ENCODE measurements at regions of chr1 and their contacts with region 1.

Region 1: DNA sequence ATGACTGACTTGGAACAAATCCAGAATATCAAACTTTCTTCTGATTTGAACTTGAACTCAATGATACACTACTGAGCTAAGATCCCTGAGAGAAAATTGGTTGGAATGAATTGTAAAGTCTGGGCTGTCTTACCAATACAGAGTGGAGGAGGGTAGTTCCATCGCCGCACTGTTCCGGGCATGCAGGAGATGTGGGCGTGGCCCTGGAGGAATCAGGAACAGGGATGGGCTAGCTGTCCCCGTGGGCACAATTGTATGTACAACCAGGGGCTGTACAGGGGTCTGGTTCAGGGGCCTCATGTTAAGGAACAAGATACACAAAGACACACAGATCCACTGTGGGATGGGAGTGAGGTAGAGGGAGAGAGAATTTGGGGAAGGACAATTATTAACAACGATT is 144.3 kb downstream of the ZSCAN20 start:
- DNase-seq: no peak
- H3K4me3 ChIP-seq: no peak overlapping the region
- H3K27ac ChIP-seq: no peak overlapping the region
- H3K27me3 ChIP-seq: no peaks in the 10 kb centered on the region
- CTCF ChIP-seq: no peak

Region 2: DNA sequence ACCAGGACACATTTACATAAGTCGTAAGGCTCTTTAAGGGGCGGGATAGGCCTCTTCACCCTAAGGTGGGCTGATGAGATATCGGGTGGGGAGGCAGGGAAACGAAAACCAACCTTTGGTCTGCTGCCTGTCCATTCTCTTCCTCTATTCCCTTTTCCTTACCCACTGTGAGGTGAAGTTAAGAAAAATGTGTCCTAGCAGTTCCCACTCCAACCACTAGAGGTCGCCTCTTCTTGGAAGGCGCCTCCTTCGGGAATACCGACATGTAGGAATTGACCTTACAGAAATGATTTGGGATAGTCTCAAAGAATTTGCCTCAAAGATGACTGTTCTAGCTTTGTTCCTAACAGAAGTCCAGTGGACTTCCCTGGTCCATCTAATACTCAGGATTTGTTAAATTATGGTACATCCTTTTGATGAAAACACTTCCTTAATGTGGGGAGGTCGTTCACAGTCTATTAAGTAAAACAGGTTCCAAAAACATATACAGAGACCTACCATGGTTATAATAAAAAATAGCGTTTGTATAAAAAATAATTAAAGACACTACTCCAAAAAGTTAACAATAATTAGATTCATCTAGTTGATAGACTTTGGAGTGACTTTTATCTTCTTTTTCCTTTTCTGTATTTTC is 521.7 kb before region 1 on chr1:
- CTCF ChIA-PET with region 1: interaction called, 11 read pairs
- POLR2A ChIA-PET with region 1: no interaction called
- DNase-seq: peak; percentile 29
- H3K4me3 ChIP-seq: no peak overlapping the region
- H3K27ac ChIP-seq: no peak overlapping the region
- H3K27me3 ChIP-seq: no peaks in the 10 kb centered on the region
- CTCF ChIP-seq: peak; percentile 99

Region 3: DNA sequence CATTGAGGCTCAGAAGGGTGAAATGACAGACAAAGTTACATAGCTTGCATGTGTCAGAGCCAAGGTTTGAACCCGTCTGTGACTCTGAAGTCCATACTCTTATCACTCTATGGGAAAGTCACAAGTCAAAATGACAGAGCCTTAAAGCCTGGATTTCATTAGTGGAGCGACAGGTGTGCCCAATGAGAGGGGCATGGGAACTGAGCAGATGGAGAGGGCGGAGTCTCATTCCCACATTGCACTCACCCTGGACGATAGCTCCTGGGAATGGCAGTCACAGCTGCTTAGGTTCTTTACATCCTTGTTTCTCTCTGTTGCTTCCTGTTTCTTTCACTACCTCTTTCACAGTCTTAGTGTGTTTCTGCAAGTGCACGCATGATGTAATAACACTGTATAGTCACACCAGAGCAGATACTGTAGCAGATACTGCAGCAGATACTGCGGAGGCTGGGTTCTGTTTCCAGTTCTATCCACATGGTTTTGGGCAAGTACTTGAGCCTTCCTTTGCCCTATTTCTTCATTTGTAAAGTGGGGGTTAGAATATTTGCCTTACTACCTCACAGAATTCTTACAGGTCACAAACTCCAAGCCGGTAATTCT is 17.2 kb before region 1 on chr1:
- CTCF ChIA-PET with region 1: interaction called, 19 read pairs
- POLR2A ChIA-PET with region 1: no interaction called
- DNase-seq: no peak
- H3K4me3 ChIP-seq: no peak overlapping the region
- H3K27ac ChIP-seq: no peak overlapping the region
- H3K27me3 ChIP-seq: no peaks in the 10 kb centered on the region
- CTCF ChIP-seq: no peak

Region 4: GRCh38 chr1:33653226-33653625 is 36.5 kb after region 1 on chr1:
- CTCF ChIA-PET with region 1: no interaction called
- POLR2A ChIA-PET with region 1: no interaction called
- DNase-seq: no peak
- H3K4me3 ChIP-seq: no peak overlapping the region
- H3K27ac ChIP-seq: no peak overlapping the region
- H3K27me3 ChIP-seq: no peaks in the 10 kb centered on the region
- CTCF ChIP-seq: no peak

Region 5: GRCh38 chr1:33692206-33693188 is 75.7 kb after region 1 on chr1:
- CTCF ChIA-PET with region 1: no interaction called
- POLR2A ChIA-PET with region 1: no interaction called
- DNase-seq: no peak
- H3K4me3 ChIP-seq: no peak overlapping the region
- H3K27ac ChIP-seq: no peak overlapping the region
- H3K27me3 ChIP-seq: no peaks in the 10 kb centered on the region
- CTCF ChIP-seq: no peak

Region 6: GRCh38 chr1:34013958-34014737 is 397.4 kb after region 1 on chr1:
- CTCF ChIA-PET with region 1: no interaction called
- POLR2A ChIA-PET with region 1: no interaction called
- DNase-seq: no peak
- H3K4me3 ChIP-seq: no peak overlapping the region
- H3K27ac ChIP-seq: no peak overlapping the region
- H3K27me3 ChIP-seq: no peaks in the 10 kb centered on the region
- CTCF ChIP-seq: peak; percentile 57